Motor neuron (in vitro differentiated cells): ENCODE measurements at regions of chr2 and their contacts with region 1.

Region 1: DNA sequence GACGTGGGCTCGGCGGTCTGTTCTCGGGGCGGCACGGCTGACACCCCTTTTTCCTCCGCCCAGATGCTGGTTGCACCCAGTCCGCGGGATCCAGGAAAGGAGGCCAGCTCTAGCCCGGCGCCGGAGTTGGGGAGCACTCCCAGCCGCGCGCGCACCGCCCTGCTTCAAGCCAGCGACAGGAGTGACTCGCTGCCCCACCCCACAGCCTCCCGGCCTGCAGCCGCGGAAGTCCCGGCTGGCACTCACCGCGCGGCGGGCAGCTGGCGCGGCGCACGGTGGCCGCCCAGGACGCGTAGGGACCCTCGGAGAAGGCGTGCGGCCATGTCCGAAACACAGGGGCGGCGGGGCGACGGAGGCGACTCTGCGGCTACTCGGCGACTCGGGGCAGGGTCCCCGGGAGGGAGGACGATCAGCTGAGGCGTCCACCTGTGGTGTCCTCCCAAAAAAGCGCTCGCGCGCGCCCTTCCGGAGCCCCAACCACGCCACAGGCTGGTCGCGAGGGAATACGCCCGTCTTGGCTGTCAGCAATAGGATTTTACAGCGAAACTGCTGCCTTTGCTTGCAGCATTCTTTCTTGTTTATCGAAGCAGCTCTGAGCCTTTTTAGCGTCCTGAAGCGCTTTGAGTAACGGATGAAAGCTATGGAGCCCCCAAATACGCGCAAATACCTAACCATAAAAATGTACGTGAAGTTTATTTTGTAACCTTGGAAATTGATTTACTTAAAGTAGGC is at the start of gene ACADL:
- ATAC-seq: peak; percentile 94 to 98 (median 96)
- H3K4me3 ChIP-seq: peak within 1 kb of the TSS; percentile 46 to 74 (median 58)
- H3K27ac ChIP-seq: no peak within 1 kb of the TSS
- H3K4me1 ChIP-seq: no peaks in the 10 kb centered on the region
- total RNA-seq, gene ACADL: 0.08 to 1.4 (median 0.41) TPM in 6 of 8 experiments, not detected in the others

Region 2: GRCh38 chr2:208392300-208393080 is 1832.6 kb before region 1 on chr2:
- in situ Hi-C with region 1: loop called in 1 of 9 experiments (anchors 25 kb)
- ATAC-seq: no peak
- H3K4me3 ChIP-seq: no peak overlapping the region
- H3K27ac ChIP-seq: no peak overlapping the region
- H3K4me1 ChIP-seq: no peaks in the 10 kb centered on the region

Region 3: GRCh38 chr2:209960676-209961630 is 264.2 kb before region 1 on chr2:
- in situ Hi-C with region 1: loop called in 1 of 9 experiments (anchors 25 kb)
- ATAC-seq: peak; percentile 88 to 97 (median 93)
- H3K4me3 ChIP-seq: no peak overlapping the region
- H3K27ac ChIP-seq: peak overlapping the region; percentile 21 to 53
- H3K4me1 ChIP-seq: peaks cover 22 to 36% of the 10 kb centered on the region in 2 donors

Region 4: GRCh38 chr2:210399440-210400041 is 174.4 kb after region 1 on chr2:
- in situ Hi-C with region 1: loop called in 1 of 9 experiments (anchors 25 kb)
- ATAC-seq: no peak
- H3K4me3 ChIP-seq: no peak overlapping the region
- H3K27ac ChIP-seq: no peak overlapping the region
- H3K4me1 ChIP-seq: no peaks in the 10 kb centered on the region